ENCODE measurements at regions of chr19 and their contacts with region 1.

Region 1: DNA sequence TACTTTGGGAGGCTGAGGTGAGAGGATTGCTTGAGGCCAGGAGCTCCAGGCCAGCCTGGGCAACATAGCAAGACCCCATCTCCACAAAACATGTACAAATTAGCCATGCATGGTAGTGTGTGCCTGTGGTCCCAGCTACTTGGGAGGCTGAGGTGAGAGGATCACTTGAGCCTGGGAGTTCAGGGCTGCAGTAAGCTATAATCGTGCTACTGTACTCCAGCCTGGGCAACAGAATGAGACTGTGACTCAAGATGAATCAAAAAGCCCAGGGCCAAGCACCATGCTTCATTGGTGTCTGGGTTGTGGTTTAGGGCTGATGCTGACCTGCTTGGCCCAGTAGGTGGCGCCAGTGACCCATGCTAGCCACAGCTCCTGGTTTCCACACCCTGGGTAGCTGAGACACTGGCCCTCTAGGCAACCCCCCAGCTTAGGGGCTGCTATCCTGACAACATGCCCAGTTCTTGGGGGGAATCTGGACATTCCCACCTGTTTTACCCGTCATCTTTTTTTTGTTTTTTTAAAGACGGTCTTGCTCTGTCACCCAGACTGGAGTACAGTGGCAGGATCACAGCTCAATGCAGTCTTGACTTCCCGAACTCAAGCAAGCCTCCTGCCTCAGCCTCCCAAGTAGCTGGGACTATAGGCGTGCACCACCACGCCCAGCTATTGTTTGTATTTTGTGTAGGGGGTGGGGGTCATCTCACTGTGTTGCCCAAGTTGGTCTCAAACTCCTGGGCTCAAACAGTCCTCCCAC is 5.5 kb downstream of the CCDC124 start:
- DNase-seq: peak; percentile 91
- H3K4me3 Mint-ChIP-seq: no peak overlapping the region
- H3K27ac Mint-ChIP-seq: no peak overlapping the region
- H3K4me1 Mint-ChIP-seq: peaks cover 13% of the 10 kb centered on the region
- H3K27me3 Mint-ChIP-seq: no peaks in the 10 kb centered on the region

Region 2: DNA sequence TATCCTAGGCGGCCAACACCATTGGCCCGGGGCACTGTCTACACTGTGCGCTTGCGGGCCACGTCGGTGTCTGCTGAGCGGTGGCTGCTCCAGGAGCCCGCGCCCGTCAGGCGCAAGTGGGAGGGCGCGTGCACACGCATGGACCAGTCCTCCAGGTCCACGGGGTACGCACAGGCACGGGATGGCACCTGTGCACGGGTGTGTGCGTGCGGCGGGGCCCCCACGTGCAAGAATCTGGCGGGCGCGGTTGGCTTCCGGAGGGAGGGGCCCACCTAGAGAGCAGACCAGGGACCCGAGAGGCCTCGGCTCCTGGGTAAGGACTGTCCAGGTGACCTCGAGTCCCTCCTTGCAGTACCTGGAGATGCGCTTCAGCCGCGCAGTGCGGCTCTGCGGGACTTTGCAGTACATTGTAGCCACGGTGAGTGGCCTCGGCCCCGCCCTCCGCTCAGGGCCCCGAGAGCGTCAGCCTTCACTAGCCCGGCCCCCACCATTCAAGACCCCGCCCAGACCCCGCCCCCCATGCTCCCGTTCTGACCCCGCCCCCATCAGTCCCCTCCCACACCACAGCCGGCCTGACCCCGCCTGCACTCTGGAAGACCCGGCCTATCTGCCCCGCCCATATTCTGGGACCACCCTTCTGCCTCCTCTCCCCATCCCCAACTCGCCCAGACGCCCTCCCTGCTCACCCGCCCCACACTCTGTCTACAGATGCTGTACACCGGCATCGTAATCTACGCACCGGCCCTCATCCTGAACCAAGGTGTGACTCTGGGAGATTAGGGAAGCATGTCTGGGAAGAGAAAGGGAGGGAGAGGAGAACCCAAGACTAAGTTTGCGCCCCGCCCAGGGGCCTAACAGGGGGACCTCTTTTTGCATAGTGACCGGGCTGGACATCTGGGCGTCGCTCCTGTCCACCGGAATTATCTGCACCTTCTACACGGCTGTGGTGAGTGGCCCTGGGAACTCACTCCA is 64.2 kb before region 1 on chr19:
- CTCF ChIA-PET with region 1: interaction called, 42 read pairs
- POLR2A ChIA-PET with region 1: interaction called, 11 read pairs
- intact Hi-C with region 1: no loop called
- DNase-seq: peak; percentile 84
- H3K4me3 Mint-ChIP-seq: peak overlapping the region; percentile 81
- H3K27ac Mint-ChIP-seq: no peak overlapping the region
- H3K4me1 Mint-ChIP-seq: peaks cover 17% of the 10 kb centered on the region
- H3K27me3 Mint-ChIP-seq: no peaks in the 10 kb centered on the region

Region 3: DNA sequence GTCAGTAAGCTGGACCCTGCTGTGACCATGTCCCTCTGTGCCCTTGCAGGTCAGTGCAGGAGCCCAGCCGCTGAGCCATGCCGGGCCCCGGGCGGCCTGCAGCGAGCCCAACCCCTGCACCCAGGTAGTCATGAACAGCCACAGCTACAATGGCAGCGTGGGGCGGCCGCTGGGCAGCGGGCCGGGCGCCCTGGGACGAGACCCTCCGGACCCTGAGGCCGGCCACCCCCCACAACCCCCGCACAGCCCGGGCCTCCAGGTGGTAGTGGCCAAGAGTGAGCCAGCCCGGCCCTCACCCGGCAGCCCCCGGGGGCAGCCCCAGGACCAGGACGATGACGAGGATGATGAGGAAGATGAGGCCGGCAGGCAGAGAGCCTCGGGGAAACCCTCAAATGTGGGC is 35.5 kb after region 1 on chr19:
- CTCF ChIA-PET with region 1: no interaction called
- POLR2A ChIA-PET with region 1: no interaction called
- intact Hi-C with region 1: no loop called
- DNase-seq: no peak
- H3K4me3 Mint-ChIP-seq: no peak overlapping the region
- H3K27ac Mint-ChIP-seq: no peak overlapping the region
- H3K4me1 Mint-ChIP-seq: no peaks in the 10 kb centered on the region
- H3K27me3 Mint-ChIP-seq: peaks cover 3% of the 10 kb centered on the region

Measured in activated CD4-positive, alpha-beta memory T cell treated with anti-CD3 and anti-CD28 coated beads for 36 hours (primary cell).